Transverse colon (tissue), 4 donors: ENCODE measurements at regions of chr2 and their contacts with region 1.

Region 1: DNA sequence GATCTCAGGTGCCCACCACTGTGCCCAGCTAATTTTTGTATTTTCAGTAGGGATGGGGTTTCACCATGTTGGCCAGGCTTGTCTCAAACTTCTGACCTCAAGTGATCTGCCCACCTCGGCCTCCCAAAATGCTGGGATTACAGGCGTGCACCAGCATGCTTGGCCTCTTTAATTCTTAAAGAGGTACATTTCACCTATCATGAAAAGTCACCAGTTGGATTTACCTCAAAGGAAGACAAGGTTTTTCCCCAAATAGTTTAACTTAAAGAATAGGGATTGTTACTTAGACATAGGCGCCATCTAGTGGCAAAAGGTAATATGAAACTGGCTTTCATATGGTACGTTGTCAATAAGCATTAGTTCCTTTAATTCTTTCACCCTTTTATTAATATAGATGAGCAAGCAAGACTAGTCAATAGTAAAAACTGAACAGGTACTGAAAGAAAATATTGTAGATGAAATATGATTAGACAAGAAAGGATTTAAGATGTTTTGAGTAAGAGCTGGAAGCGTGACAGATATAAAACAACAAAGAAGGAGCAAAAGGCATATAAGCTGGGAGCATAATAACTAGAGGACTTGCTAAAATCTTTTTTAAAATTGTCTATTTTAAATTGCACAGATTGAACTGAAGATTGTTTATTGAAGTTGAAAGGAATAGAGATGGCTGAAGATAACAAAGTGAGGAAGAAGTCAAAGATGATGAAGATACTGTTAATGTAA is 35.0 kb upstream of the PSMD14 start:
- DNase-seq: no peak
- H3K4me3 ChIP-seq: no peak overlapping the region
- H3K27ac ChIP-seq: no peak overlapping the region
- H3K4me1 ChIP-seq: no peaks in the 10 kb centered on the region
- H3K27me3 ChIP-seq: no peaks in the 10 kb centered on the region
- CTCF ChIP-seq: peak; percentile 55 to 78 (median 71)
- EP300 ChIP-seq: no peak
- POLR2A ChIP-seq: no peak

Region 2: DNA sequence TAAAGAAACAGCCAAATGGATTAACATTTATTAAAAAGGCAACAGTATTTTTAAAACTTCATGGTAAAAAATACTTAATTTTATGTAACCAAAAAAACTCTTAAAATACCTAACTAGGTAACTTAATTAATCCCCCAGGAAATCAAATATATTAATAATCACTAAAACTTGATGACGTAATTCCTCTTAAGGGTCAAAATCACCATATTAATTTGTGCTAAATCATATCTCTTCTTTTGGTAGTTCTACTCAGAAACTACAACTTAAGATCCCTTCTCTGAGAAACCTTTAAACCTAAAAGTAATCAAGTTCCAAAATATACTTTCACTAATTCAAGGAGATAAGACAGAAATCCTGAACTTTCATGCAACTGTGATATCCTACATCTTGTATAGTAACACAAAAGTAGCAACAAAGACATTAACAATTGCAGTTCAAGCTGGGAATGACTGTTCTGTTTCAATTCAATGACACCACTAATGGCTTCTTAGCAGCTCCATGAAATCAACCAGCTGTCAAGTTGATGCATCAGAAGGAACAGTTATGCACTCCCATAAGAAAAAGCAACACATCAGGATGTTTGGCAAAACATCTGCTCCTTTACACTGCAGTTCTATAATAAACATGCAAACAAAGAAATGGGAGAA is 1660.8 kb before region 1 on chr2:
- in situ Hi-C with region 1: no loop called
- intact Hi-C with region 1: no loop called
- DNase-seq: no peak
- H3K4me3 ChIP-seq: peak overlapping the region in 2 of 4 donors; percentile 66 to 89
- H3K27ac ChIP-seq: peak overlapping the region; percentile 93 to 99 (median 98)
- H3K4me1 ChIP-seq: peaks cover 17 to 72% (median 41%) of the 10 kb centered on the region in 4 donors
- H3K27me3 ChIP-seq: no peaks in the 10 kb centered on the region
- CTCF ChIP-seq: no peak
- EP300 ChIP-seq: no peak
- POLR2A ChIP-seq: no peak

Region 3: GRCh38 chr2:160695402-160696086 is 577.7 kb before region 1 on chr2:
- in situ Hi-C with region 1: no loop called
- intact Hi-C with region 1: no loop called
- DNase-seq: no peak
- H3K4me3 ChIP-seq: no peak overlapping the region
- H3K27ac ChIP-seq: peak overlapping the region in 3 of 4 donors; percentile 17 to 38 (median 19)
- H3K4me1 ChIP-seq: peaks cover 0 to 4% (median 0%) of the 10 kb centered on the region in 4 donors
- H3K27me3 ChIP-seq: no peaks in the 10 kb centered on the region
- CTCF ChIP-seq: no peak
- EP300 ChIP-seq: no peak
- POLR2A ChIP-seq: no peak

Region 4: GRCh38 chr2:160940699-160941098 is 332.5 kb before region 1 on chr2:
- in situ Hi-C with region 1: no loop called
- intact Hi-C with region 1: no loop called
- DNase-seq: peak; percentile 19
- H3K4me3 ChIP-seq: no peak overlapping the region
- H3K27ac ChIP-seq: no peak overlapping the region
- H3K4me1 ChIP-seq: peaks cover 0 to 7% (median 0%) of the 10 kb centered on the region in 4 donors
- H3K27me3 ChIP-seq: no peaks in the 10 kb centered on the region
- CTCF ChIP-seq: no peak
- EP300 ChIP-seq: no peak
- POLR2A ChIP-seq: no peak

Region 5: GRCh38 chr2:161223139-161223732 is 50.0 kb before region 1 on chr2:
- in situ Hi-C with region 1: loop called in 2 of 4 experiments (anchors 10 kb)
- intact Hi-C with region 1: loop called (anchors 5 kb)
- DNase-seq: no peak
- H3K4me3 ChIP-seq: no peak overlapping the region
- H3K27ac ChIP-seq: no peak overlapping the region
- H3K4me1 ChIP-seq: peaks cover 0 to 11% (median 0%) of the 10 kb centered on the region in 4 donors
- H3K27me3 ChIP-seq: no peaks in the 10 kb centered on the region
- CTCF ChIP-seq: peak; percentile 67 to 82 (median 70)
- EP300 ChIP-seq: no peak
- POLR2A ChIP-seq: no peak

Region 6: DNA sequence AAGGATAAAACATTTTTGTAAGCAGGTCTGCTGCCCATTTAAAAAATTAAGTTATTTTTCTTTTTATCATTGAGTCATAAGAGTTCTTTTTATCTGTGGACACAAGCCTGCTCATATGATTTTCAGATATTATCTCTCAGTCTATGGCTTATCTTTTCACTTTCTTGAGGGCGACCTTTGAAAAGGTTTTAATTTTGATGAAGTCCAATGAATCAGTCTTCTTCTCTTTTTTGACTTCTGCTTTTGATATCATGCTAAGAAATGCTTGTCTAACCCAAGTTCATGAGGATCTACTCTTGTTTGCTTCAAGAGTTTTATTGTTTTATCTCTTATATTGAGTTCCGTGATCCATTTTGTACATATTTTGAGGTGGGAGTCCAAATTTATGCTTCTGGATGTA is 71.5 kb after region 1 on chr2:
- in situ Hi-C with region 1: no loop called
- intact Hi-C with region 1: no loop called
- DNase-seq: no peak
- H3K4me3 ChIP-seq: no peak overlapping the region
- H3K27ac ChIP-seq: no peak overlapping the region
- H3K4me1 ChIP-seq: no peaks in the 10 kb centered on the region
- H3K27me3 ChIP-seq: no peaks in the 10 kb centered on the region
- CTCF ChIP-seq: no peak
- EP300 ChIP-seq: no peak
- POLR2A ChIP-seq: no peak